CD4-positive, alpha-beta memory T cell (primary cell): ENCODE measurements at regions of chr7 and their contacts with region 1.

Region 1: GRCh38 chr7:76314042-76314721 is 11.7 kb downstream of the HSPB1 start:
- DNase-seq: peak; percentile 92 to 94 (median 93)
- H3K4me3 ChIP-seq: no peak overlapping the region
- H3K4me3 Mint-ChIP-seq: peak overlapping the region in 4 of 8 donors; percentile 32 to 72 (median 54)
- H3K27ac ChIP-seq: no peak overlapping the region
- H3K27ac Mint-ChIP-seq: peak overlapping the region in 3 of 7 donors; percentile 41 to 86 (median 77)
- H3K4me1 ChIP-seq: peaks cover 20% of the 10 kb centered on the region
- H3K4me1 Mint-ChIP-seq: peaks cover 15 to 30% (median 21%) of the 10 kb centered on the region in 4 donors
- H3K27me3 ChIP-seq: no peaks in the 10 kb centered on the region
- H3K27me3 Mint-ChIP-seq: no peaks in the 10 kb centered on the region

Region 2: GRCh38 chr7:76179686-76180085 is 134.5 kb before region 1 on chr7:
- CTCF ChIA-PET with region 1: interaction called, 104 read pairs
- POLR2A ChIA-PET with region 1: interaction called, 5 read pairs
- intact Hi-C with region 1: loop called (anchors 1 kb)
- DNase-seq: no peak
- H3K4me3 ChIP-seq: no peak overlapping the region
- H3K4me3 Mint-ChIP-seq: no peak overlapping the region
- H3K27ac ChIP-seq: no peak overlapping the region
- H3K27ac Mint-ChIP-seq: no peak overlapping the region
- H3K4me1 ChIP-seq: no peaks in the 10 kb centered on the region
- H3K4me1 Mint-ChIP-seq: peaks cover 0 to 6% (median 4%) of the 10 kb centered on the region in 4 donors
- H3K27me3 ChIP-seq: no peaks in the 10 kb centered on the region
- H3K27me3 Mint-ChIP-seq: peaks cover 0 to 3% of the 10 kb centered on the region in 2 donors

Region 3: GRCh38 chr7:76282344-76283253 is 31.6 kb before region 1 on chr7:
- CTCF ChIA-PET with region 1: interaction called, 51 read pairs
- POLR2A ChIA-PET with region 1: interaction called, 5 read pairs
- intact Hi-C with region 1: loop called (anchors 5 kb)
- DNase-seq: no peak
- H3K4me3 ChIP-seq: peak overlapping the region in 1 of 2 donors; percentile 14
- H3K4me3 Mint-ChIP-seq: peak overlapping the region in 7 of 8 donors; percentile 73 to 86 (median 81)
- H3K27ac ChIP-seq: no peak overlapping the region
- H3K27ac Mint-ChIP-seq: no peak overlapping the region
- H3K4me1 ChIP-seq: peaks cover 13% of the 10 kb centered on the region
- H3K4me1 Mint-ChIP-seq: peaks cover 6 to 17% (median 15%) of the 10 kb centered on the region in 4 donors
- H3K27me3 ChIP-seq: peaks cover 16% of the 10 kb centered on the region
- H3K27me3 Mint-ChIP-seq: peaks cover 20 to 25% of the 10 kb centered on the region in 2 donors

Region 4: DNA sequence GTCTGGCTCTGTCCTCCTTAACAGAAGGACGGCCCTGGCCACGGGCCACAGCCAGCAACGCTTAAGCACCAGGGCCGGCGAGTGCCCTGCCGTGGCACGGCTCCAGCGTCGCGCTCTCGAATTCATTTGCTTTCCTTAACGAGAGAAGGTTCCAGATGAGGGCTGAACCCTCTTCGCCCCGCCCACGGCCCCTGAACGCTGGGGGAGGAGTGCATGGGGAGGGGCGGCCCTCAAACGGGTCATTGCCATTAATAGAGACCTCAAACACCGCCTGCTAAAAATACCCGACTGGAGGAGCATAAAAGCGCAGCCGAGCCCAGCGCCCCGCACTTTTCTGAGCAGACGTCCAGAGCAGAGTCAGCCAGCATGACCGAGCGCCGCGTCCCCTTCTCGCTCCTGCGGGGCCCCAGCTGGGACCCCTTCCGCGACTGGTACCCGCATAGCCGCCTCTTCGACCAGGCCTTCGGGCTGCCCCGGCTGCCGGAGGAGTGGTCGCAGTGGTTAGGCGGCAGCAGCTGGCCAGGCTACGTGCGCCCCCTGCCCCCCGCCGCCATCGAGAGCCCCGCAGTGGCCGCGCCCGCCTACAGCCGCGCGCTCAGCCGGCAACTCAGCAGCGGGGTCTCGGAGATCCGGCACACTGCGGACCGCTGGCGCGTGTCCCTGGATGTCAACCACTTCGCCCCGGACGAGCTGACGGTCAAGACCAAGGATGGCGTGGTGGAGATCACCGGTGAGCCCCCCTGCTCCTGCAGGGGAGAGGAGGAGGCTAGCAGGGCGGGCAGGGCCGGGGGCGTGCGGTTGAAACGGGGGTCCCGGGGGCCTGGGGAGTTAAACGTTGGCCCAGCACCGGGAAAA is 11.6 kb before region 1 on chr7 and contains the start of gene HSPB1:
- CTCF ChIA-PET with region 1: interaction called, 350 read pairs
- POLR2A ChIA-PET with region 1: interaction called, 26 read pairs
- intact Hi-C with region 1: loop called (anchors 1 kb)
- DNase-seq: peak; percentile 61 to 82 (median 65)
- H3K4me3 ChIP-seq: peak within 1 kb of the TSS; percentile 61 to 63
- H3K4me3 Mint-ChIP-seq: peak within 1 kb of the TSS; percentile 90 to 97 (median 92)
- H3K27ac ChIP-seq: peak within 1 kb of the TSS; percentile 62
- H3K27ac Mint-ChIP-seq: peak within 1 kb of the TSS; percentile 88 to 96 (median 93)
- H3K4me1 ChIP-seq: peaks cover 6% of the 10 kb centered on the region
- H3K4me1 Mint-ChIP-seq: peaks cover 11 to 24% (median 15%) of the 10 kb centered on the region in 4 donors
- H3K27me3 ChIP-seq: no peaks in the 10 kb centered on the region
- H3K27me3 Mint-ChIP-seq: no peaks in the 10 kb centered on the region
- total RNA-seq, gene HSPB1: 41.9 to 43.1 TPM

Region 5: GRCh38 chr7:76393116-76394031 is 79.2 kb after region 1 on chr7:
- CTCF ChIA-PET with region 1: no interaction called
- POLR2A ChIA-PET with region 1: interaction called, 18 read pairs
- intact Hi-C with region 1: loop called (anchors 2 kb)
- DNase-seq: peak; percentile 87 to 91 (median 91)
- H3K4me3 ChIP-seq: peak overlapping the region; percentile 21 to 89
- H3K4me3 Mint-ChIP-seq: peak overlapping the region; percentile 85 to 93 (median 89)
- H3K27ac ChIP-seq: peak overlapping the region; percentile 69
- H3K27ac Mint-ChIP-seq: peak overlapping the region; percentile 78 to 96 (median 93)
- H3K4me1 ChIP-seq: peaks cover 28% of the 10 kb centered on the region
- H3K4me1 Mint-ChIP-seq: peaks cover 10 to 31% (median 18%) of the 10 kb centered on the region in 4 donors
- H3K27me3 ChIP-seq: no peaks in the 10 kb centered on the region
- H3K27me3 Mint-ChIP-seq: no peaks in the 10 kb centered on the region